BJ (cell line): ENCODE measurements at regions of chr5 and their contacts with region 1.

Region 1: DNA sequence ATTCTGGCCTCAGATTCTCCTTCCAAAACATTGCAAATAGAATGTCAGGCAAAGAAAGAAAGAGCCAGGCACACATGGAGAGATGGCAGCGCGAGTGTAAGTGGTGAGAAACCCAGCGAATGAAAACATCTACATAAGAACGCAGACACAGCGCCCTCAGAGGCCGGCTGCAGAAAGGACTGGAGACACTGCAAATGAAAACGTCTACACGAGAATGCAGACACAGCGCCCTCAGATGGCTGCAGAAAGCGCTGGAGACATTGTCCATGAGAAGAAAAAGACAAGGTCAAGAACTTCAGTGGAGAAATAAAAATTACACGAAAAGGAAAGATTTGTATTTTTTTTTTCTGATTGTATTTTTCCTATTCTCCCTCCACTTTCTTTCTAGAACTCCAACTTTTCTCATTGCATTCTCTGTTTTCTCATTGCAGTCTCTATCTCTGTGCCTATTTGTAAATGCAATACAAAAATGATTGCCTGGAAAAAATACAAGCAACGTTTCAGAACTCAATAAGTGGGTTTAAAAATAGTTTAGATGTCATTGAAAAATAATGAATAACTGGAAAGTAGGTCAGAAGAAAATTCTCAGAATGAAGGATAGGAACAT is 117.9 kb upstream of the LPCAT1 start:
- DNase-seq: peak; percentile 40
- H3K4me3 ChIP-seq: no peak overlapping the region
- H3K27me3 ChIP-seq: peaks cover 14% of the 10 kb centered on the region
- CTCF ChIP-seq: peak; percentile 97

Region 2: GRCh38 chr5:1167728-1168709 is 473.6 kb before region 1 on chr5:
- CTCF ChIA-PET with region 1: interaction called, 110 read pairs
- POLR2A ChIA-PET with region 1: no interaction called
- DNase-seq: peak; percentile 9
- H3K4me3 ChIP-seq: no peak overlapping the region
- H3K27me3 ChIP-seq: no peaks in the 10 kb centered on the region
- CTCF ChIP-seq: peak; percentile 83

Region 3: DNA sequence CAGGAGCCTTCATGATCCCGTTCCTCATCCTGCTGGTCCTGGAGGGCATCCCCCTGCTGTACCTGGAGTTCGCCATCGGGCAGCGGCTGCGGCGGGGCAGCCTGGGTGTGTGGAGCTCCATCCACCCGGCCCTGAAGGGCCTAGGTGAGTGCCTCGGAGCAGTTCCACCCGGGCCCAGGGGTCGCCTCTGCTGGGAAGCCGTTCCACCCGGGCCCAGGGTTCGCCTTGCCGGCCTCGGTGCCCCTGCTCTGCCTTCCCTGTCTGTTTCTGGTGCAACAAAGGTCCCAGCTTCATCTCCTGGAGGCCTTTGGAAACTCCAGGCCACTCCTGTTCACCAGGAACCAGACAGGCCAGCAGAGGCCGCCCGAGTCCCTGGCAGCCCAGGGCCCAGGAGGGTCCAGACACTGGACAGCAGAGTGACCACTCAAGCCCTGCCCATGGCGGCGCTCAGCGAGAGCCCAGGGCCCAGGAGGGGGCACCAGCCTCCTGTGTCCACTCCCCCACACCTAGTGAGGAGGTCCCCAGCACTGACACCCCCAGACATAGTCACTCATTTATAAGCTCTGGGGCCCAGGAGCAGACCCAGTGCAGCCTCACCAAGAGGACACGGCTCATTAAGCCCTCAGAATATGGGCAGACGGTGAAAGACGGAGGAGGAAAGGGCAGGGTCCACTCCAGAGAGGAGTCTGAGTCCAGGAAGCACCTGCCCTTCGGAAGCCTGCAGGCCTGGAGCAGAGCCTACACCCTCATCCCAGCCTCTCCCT is 432.7 kb before region 1 on chr5:
- CTCF ChIA-PET with region 1: interaction called, 14 read pairs
- POLR2A ChIA-PET with region 1: interaction called, 3 read pairs
- DNase-seq: no peak
- H3K4me3 ChIP-seq: no peak overlapping the region
- H3K27me3 ChIP-seq: peaks cover 1% of the 10 kb centered on the region
- CTCF ChIP-seq: peak; percentile 64

Region 4: DNA sequence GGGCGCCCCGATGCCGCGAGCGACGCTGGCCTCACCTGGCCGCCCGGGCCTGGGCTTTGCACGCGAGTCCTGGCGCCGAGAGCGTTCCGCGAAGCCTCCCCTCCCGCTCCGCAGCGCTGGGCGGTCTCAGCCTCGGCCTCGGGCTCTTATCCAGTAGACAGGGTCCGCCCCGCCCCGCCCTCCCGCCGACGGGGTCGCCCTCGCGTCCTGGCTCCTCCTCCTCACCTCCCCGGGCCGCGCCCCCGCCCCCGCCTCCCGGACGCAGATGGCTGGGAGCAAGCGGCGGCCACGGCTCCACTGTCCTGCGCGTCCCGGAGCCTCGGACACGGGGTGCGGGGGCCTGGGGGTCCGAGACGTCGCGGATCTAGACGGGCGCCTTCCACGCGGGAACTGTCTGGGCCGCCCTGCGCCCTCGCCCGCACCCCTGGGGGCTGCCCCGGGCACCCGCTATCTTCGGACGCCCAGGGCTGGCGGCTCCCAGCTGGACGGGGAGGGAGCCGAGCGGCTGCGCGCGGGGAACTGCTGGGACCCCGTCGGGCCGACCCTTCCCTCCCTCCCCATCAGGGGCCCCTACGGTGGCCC is 196.3 kb before region 1 on chr5 and contains the start of gene SLC6A3:
- CTCF ChIA-PET with region 1: no interaction called
- POLR2A ChIA-PET with region 1: no interaction called
- DNase-seq: no peak
- H3K4me3 ChIP-seq: no peak within 1 kb of the TSS
- H3K27me3 ChIP-seq: peaks cover 32% of the 10 kb centered on the region
- CTCF ChIP-seq: no peak
- polyA plus RNA-seq, gene SLC6A3: not detected in 2 replicates

Region 5: DNA sequence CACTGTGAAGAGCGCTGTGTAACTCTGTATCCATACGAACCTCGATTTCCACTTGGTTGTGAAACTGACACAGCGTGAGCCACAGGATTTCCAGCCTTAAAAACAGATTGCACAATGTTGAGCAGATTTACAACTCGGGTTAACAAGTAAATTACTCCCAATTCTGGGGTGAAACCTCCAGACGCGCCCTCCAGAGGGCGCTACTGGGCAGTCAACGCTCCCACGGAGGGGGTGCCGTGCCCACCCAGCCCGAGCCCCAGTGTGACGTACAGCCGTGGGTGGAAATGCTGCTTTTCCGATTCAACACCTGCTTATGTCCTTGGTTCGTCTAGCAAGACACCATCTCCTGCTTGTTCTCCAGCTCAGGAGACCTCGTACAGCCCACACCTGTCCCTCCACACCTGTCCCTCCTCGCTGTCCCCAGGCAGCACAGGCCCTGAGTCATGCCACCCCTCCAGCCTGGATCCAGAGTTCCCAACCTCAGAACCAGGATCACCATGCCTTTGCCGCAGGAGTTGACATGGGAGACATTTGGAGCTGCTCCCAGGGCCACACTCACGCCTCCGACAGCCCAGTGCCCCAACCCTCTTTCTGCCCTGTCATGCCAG is 162.0 kb before region 1 on chr5:
- CTCF ChIA-PET with region 1: interaction called, 16 read pairs
- POLR2A ChIA-PET with region 1: no interaction called
- DNase-seq: no peak
- H3K4me3 ChIP-seq: no peak overlapping the region
- H3K27me3 ChIP-seq: no peaks in the 10 kb centered on the region
- CTCF ChIP-seq: peak; percentile 79

Region 6: GRCh38 chr5:1772634-1773033 is 131.0 kb after region 1 on chr5:
- CTCF ChIA-PET with region 1: no interaction called
- POLR2A ChIA-PET with region 1: no interaction called
- DNase-seq: no peak
- H3K4me3 ChIP-seq: no peak overlapping the region
- H3K27me3 ChIP-seq: peaks cover 7% of the 10 kb centered on the region
- CTCF ChIP-seq: peak; percentile 63